ENCODE measurements at regions of chr2 and their contacts with region 1.

Region 1: GRCh38 chr2:237966565-237967462 is at the start of gene UBE2F:
- DNase-seq: peak; percentile 98
- H3K4me3 Mint-ChIP-seq: peak within 1 kb of the TSS; percentile 90
- H3K27ac Mint-ChIP-seq: peak within 1 kb of the TSS; percentile 85
- H3K4me1 Mint-ChIP-seq: peaks cover 45% of the 10 kb centered on the region
- H3K27me3 Mint-ChIP-seq: no peaks in the 10 kb centered on the region
- total RNA-seq, gene UBE2F: 121 TPM in 2 replicates

Region 2: GRCh38 chr2:237181844-237182243 is 785.0 kb before region 1 on chr2:
- intact Hi-C with region 1: no loop called
- DNase-seq: no peak
- H3K4me3 Mint-ChIP-seq: no peak overlapping the region
- H3K27ac Mint-ChIP-seq: no peak overlapping the region
- H3K4me1 Mint-ChIP-seq: peaks cover 4% of the 10 kb centered on the region
- H3K27me3 Mint-ChIP-seq: peaks cover 10% of the 10 kb centered on the region

Region 3: GRCh38 chr2:237858294-237859081 is 108.3 kb before region 1 on chr2:
- intact Hi-C with region 1: loop called (anchors 1 kb)
- DNase-seq: peak; percentile 39
- H3K4me3 Mint-ChIP-seq: peak overlapping the region; percentile 86
- H3K27ac Mint-ChIP-seq: peak overlapping the region; percentile 60
- H3K4me1 Mint-ChIP-seq: peaks cover 21% of the 10 kb centered on the region
- H3K27me3 Mint-ChIP-seq: peaks cover 53% of the 10 kb centered on the region

Region 4: DNA sequence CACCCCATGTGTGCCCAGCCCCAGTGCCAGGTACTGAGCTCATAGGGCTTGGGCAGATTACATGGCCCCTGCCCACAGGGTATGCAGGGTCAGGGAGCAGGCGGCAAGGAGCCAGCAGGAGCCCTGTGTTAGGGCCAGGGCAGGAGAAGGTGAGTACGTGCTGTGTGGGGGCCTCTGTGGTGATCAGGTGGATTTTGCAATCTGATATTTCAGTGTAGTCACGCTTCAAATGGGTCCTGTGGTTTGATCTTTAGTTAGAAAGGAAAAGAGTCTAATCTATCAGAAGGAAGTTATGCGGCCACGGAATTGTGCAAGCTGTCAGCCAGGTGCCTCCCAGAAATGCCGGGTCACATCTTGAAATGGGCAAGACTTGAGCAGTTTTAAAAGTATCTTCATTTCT is 13.9 kb after region 1 on chr2:
- intact Hi-C with region 1: loop called (anchors 1 kb)
- DNase-seq: no peak
- H3K4me3 Mint-ChIP-seq: peak overlapping the region; percentile 34
- H3K27ac Mint-ChIP-seq: peak overlapping the region; percentile 63
- H3K4me1 Mint-ChIP-seq: peaks cover 77% of the 10 kb centered on the region
- H3K27me3 Mint-ChIP-seq: no peaks in the 10 kb centered on the region

Region 5: DNA sequence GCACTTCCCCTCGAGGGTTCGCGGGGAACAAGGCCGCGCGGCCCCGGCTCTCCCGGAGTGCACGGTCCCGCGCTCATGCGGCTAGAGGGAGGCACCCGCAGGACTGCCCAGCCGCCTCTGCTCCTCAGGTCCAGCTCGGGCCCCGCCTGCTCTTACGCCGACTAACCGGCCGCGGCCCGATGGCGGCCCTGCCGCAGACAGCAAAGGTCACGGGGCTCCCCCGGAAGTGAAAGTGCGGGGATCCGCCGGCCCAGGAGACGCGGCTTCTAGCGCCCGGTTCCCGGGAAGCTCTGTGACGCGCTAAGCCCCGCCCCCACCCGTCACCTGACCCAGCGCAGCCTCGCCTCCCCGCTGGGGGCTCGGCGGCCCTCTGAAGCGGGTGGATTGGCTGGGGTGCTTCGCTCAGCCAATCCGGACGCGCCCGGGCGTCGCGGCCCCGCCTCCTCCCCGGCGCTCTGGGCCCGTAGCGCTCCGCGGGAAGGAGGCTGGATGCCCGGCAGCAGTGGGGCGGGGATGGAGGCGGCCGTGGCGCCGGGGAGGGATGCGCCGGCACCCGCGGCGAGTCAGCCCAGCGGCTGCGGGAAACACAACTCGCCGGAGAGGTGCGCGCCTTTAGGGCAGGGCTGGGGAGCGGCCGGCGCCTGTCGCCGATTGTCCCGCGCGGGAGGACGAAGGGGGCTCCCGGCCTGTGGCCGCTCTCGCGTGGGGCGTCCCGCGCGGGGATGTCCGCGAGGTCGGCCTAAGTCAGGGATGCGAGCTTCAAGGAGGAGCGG is 93.9 kb after region 1 on chr2 and contains the start of gene SCLY:
- intact Hi-C with region 1: loop called (anchors 1 kb)
- DNase-seq: peak; percentile 93
- H3K4me3 Mint-ChIP-seq: peak within 1 kb of the TSS; percentile 90
- H3K27ac Mint-ChIP-seq: peak within 1 kb of the TSS; percentile 91
- H3K4me1 Mint-ChIP-seq: peaks cover 62% of the 10 kb centered on the region
- H3K27me3 Mint-ChIP-seq: peaks cover 7% of the 10 kb centered on the region
- total RNA-seq, gene SCLY: 109 and 119 TPM in 2 replicates

Region 6: GRCh38 chr2:238231251-238231793 is 264.5 kb after region 1 on chr2:
- intact Hi-C with region 1: loop called (anchors 2 kb)
- DNase-seq: peak; percentile 77
- H3K4me3 Mint-ChIP-seq: peak overlapping the region; percentile 85
- H3K27ac Mint-ChIP-seq: peak overlapping the region; percentile 56
- H3K4me1 Mint-ChIP-seq: peaks cover 20% of the 10 kb centered on the region
- H3K27me3 Mint-ChIP-seq: peaks cover 52% of the 10 kb centered on the region

Measured in activated T-helper 1 cell treated with anti-CD3 and anti-CD28 coated beads, Interleukin-12 subunit alpha, Interleukin-12 subunit beta, Interleukin-2, Interleukin-4 antibody, amounts not matched to agents 30 ng/mL and 10 ng/mL and 1 ng/mL, durations not matched to agents 14 hours and 24 hours and 36 hours (primary cell).